Ascending aorta (tissue), 2 donors: ENCODE measurements at regions of chr22 and their contacts with region 1.

Region 1: GRCh38 chr22:37676736-37677492 is 1.5 kb downstream of the LGALS1 start:
- DNase-seq: peak; percentile 93 to 97
- H3K4me3 ChIP-seq: peak overlapping the region; percentile 58 to 81
- H3K27ac ChIP-seq: peak overlapping the region; percentile 91 to 94
- H3K4me1 ChIP-seq: peaks cover 15 to 30% of the 10 kb centered on the region in 2 donors
- H3K27me3 ChIP-seq: no peaks in the 10 kb centered on the region
- CTCF ChIP-seq: no peak

Region 2: GRCh38 chr22:37282385-37282677 is 394.6 kb before region 1 on chr22 and contains the start of gene CYTH4:
- intact Hi-C with region 1: no loop called
- DNase-seq: peak; percentile 58 to 79
- H3K4me3 ChIP-seq: peak within 1 kb of the TSS in 1 of 2 donors; percentile 55
- H3K27ac ChIP-seq: peak within 1 kb of the TSS; percentile 4 to 53
- H3K4me1 ChIP-seq: no peaks in the 10 kb centered on the region
- H3K27me3 ChIP-seq: peaks cover 6% of the 10 kb centered on the region
- CTCF ChIP-seq: no peak
- total RNA-seq, gene CYTH4: 130 TPM

Region 3: GRCh38 chr22:37561212-37562048 is 115.5 kb before region 1 on chr22:
- intact Hi-C with region 1: loop called (anchors 5 kb)
- DNase-seq: peak; percentile 79 to 97
- H3K4me3 ChIP-seq: peak overlapping the region; percentile 84 to 95
- H3K27ac ChIP-seq: peak overlapping the region; percentile 98 to 99
- H3K4me1 ChIP-seq: peaks cover 39 to 52% of the 10 kb centered on the region in 2 donors
- H3K27me3 ChIP-seq: no peaks in the 10 kb centered on the region
- CTCF ChIP-seq: peak; percentile 81 to 91 (median 84)

Region 4: DNA sequence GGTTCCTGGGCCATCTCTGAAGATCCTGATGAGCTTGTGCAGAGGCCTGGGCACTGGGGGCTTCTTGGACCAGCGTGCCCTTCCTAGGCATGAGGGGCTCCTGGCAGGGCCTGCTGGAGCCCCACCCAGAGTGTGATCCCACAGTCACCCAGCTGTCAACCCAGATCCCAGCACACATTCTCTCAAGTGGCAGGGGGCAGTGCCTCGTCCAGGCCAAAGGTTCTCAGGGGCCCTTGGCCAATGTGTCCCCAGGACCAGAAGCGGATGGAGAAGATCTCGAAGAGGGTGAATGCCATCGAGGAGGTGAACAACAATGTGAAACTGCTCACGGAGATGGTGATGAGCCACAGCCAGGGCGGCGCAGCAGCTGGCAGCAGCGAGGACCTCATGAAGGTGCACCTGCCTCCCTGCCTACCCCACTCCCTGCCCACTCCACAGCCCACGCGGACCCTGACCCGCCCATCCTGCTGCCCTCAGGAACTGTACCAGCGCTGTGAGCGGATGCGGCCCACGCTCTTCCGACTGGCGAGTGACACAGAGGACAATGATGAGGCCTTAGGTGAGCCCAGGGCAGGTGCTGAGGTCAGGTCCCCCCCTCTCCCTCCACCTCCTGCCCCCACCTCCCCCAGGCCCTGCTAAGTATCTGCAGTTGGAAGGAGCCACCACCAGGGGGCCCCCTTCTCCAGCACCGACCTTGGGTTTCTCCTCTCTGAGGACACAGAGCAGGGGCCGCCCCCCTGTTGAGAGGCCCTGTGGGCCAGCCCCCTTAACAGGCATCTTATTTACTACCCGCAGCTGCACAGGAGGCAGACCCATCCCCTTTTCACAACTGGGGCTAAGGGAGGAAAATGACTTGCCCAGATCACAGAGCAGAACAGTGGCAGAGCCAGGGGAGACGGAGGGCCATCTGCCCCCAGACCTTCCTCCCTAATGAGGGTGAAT is 53.6 kb before region 1 on chr22:
- intact Hi-C with region 1: loop called (anchors 5 kb)
- DNase-seq: peak in 1 of 2 donors; percentile 83
- H3K4me3 ChIP-seq: no peak overlapping the region
- H3K27ac ChIP-seq: peak overlapping the region in 1 of 2 donors; percentile 36
- H3K4me1 ChIP-seq: peaks cover 0 to 16% of the 10 kb centered on the region in 2 donors
- H3K27me3 ChIP-seq: no peaks in the 10 kb centered on the region
- CTCF ChIP-seq: peak; percentile 34 to 94 (median 94)

Region 5: DNA sequence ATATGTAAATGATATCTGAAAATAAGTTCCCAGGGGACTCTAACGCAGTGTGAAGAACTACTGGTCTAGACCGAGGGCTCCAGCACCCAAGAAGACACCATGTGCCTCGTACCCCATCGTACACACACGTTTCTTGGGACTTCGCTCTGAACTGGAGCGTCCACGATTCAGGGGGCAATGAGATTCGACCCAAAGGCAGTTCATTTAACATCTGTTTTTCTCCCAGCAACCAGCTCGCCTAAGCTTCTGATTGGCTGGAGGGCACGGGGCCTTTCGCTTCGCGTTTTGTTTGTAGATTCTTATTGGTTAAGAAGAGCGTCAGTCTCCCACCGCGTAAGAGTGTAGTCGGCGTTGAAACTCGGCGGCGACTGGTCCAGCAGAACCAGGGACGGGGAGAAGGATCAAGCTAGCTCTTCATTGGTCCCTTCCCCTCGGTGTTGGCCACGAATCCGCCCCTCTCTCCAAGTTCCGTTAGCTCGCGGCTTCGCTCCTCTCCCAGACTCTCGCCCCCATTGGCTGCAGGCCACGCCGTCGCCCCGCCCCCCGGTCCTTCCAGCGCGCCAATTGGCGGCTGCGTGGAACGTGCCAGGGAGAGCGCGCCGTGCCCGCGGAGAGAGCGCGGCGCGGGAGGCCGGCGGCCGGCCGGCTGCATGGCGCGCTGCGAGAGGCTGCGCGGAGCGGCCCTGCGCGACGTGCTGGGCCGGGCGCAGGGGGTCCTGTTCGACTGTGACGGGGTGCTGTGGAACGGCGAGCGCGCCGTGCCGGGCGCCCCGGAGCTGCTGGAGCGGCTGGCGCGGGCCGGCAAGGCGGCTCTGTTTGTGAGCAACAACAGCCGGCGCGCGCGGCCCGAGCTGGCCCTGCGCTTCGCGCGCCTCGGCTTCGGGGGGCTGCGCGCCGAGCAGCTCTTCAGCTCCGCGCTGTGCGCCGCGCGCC is 18.5 kb before region 1 on chr22 and contains the start of gene PDXP:
- intact Hi-C with region 1: loop called (anchors 1 kb)
- DNase-seq: peak; percentile 96 to 100
- H3K4me3 ChIP-seq: peak within 1 kb of the TSS; percentile 72 to 87
- H3K27ac ChIP-seq: peak within 1 kb of the TSS; percentile 76 to 86
- H3K4me1 ChIP-seq: peaks cover 11 to 29% of the 10 kb centered on the region in 2 donors
- H3K27me3 ChIP-seq: no peaks in the 10 kb centered on the region
- CTCF ChIP-seq: no peak
- total RNA-seq, gene PDXP: 10.6 TPM